Endothelial cell of umbilical vein (primary cell): ENCODE measurements at regions of chr14 and their contacts with region 1.

Region 1: GRCh38 chr14:34931206-34931605 is 51.6 kb upstream of the SRP54 start:
- DNase-seq: peak; percentile 83
- H3K4me3 ChIP-seq: no peak overlapping the region
- H3K27ac ChIP-seq: peak overlapping the region; percentile 48
- H3K4me1 ChIP-seq: peaks cover 23% of the 10 kb centered on the region
- H3K27me3 ChIP-seq: no peaks in the 10 kb centered on the region
- CTCF ChIP-seq: no peak
- POLR2A ChIP-seq: no peak

Region 2: DNA sequence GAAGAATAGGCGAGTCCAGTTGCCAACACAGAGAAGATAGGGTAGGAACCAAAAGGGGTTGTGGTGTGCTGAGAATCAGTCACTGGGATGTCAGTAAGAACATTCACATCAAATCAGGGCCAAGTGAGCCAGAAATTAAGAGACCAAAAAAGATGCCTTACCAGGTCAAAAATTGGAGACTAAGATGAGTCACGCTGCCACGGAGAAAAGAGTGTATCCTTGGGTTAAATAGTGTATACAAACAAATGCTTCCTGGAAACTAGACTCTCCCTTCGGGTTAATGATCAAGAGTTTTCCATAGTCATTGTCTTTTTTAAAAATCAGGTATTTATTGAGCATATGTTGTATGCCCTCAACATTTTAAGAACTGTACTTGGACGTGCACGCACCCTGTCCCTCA is 10.9 kb before region 1 on chr14:
- CTCF ChIA-PET with region 1: no interaction called
- POLR2A ChIA-PET with region 1: no interaction called
- dilution Hi-C with region 1: no loop called
- intact Hi-C with region 1: loop called (anchors 1 kb)
- DNase-seq: no peak
- H3K4me3 ChIP-seq: no peak overlapping the region
- H3K27ac ChIP-seq: no peak overlapping the region
- H3K4me1 ChIP-seq: no peaks in the 10 kb centered on the region
- H3K27me3 ChIP-seq: no peaks in the 10 kb centered on the region
- CTCF ChIP-seq: no peak
- POLR2A ChIP-seq: no peak